Common myeloid progenitor, CD34-positive (primary cell): ENCODE measurements at regions of chr2 and their contacts with region 1.

Region 1: GRCh38 chr2:29796446-29796845 is 124.9 kb downstream of the ALK start:
- DNase-seq: no peak
- H3K4me3 ChIP-seq: no peak overlapping the region
- H3K27ac ChIP-seq: no peak overlapping the region
- H3K4me1 ChIP-seq: no peaks in the 10 kb centered on the region
- H3K27me3 ChIP-seq: peaks cover 0 to 10% (median 0%) of the 10 kb centered on the region in 5 experiments

Region 2: DNA sequence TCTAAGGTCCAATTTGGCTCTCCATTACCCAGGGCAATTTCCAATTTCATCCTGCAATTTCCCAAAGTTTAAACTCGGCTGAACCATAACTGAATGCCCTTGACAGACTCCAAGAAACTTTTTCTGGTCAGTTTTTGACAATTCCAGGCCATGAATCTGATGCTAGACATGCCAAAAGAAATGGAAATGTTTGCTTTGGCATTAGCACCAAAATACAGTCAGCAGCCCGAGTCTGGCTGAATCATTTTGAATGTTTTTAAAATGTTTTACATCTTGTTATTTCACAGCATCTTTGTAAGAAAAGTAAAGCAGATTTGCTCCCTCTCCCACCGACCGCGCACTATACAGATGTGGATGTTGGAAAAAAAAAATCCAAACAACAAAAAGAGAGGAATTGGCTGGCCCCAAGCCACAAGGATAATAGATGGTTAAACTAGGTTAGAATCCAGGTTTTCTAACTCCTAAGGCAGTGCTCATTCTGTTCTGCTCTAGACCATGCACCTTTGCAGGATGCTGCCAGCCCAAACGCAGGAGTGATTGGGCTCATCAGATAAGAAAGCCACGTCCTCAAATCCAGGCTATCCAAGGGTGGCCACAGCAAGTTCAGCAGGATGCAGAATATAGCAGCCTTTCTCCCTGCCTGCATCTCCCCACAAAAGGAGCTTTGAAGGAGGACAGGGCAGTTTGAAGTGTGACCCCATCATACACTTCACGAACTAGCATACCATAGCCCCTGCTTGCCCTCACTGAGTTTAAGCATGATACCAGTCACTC is 42.6 kb before region 1 on chr2:
- CTCF ChIA-PET with region 1: no interaction called
- POLR2A ChIA-PET with region 1: no interaction called
- DNase-seq: no peak
- H3K4me3 ChIP-seq: no peak overlapping the region
- H3K27ac ChIP-seq: no peak overlapping the region
- H3K4me1 ChIP-seq: no peaks in the 10 kb centered on the region
- H3K27me3 ChIP-seq: peaks cover 0 to 4% (median 0%) of the 10 kb centered on the region in 5 experiments

Region 3: DNA sequence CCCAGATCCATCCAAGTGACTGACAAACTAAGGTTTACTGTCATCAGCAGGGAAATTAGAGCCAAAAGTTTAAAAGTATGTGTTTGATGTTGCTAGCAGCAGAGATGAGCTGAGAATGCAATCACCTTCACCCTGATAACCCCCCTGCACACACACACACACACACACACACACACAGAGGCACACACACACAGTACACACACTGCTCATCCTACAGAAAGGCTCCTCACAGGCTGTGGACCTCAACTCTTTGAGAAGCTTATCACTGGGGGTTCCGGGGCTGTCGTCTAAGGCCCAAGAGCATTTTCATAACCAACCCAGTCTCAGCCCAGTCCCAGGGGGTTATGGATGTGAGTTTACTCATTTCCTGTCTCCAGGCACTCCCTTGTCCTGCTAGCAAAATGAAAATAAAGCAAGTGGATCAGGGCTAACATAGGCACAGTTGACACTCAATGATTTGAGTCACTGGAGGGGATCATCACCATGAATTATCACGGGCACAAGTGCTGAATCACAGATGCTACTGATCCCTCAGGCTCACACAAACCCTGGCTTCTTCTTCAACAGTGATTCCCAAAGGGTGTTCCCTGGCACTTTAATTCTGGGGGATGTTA is 48.4 kb after region 1 on chr2:
- CTCF ChIA-PET with region 1: no interaction called
- POLR2A ChIA-PET with region 1: interaction called, 11 read pairs
- DNase-seq: no peak
- H3K4me3 ChIP-seq: no peak overlapping the region
- H3K27ac ChIP-seq: no peak overlapping the region
- H3K4me1 ChIP-seq: peaks cover 2 to 14% (median 11%) of the 10 kb centered on the region in 4 experiments
- H3K27me3 ChIP-seq: peaks cover 0 to 4% (median 0%) of the 10 kb centered on the region in 5 experiments

Region 4: GRCh38 chr2:29865512-29865911 is 69.1 kb after region 1 on chr2:
- CTCF ChIA-PET with region 1: no interaction called
- POLR2A ChIA-PET with region 1: no interaction called
- DNase-seq: no peak
- H3K4me3 ChIP-seq: no peak overlapping the region
- H3K27ac ChIP-seq: no peak overlapping the region
- H3K4me1 ChIP-seq: no peaks in the 10 kb centered on the region
- H3K27me3 ChIP-seq: peaks cover 0 to 4% (median 2%) of the 10 kb centered on the region in 5 experiments

Region 5: DNA sequence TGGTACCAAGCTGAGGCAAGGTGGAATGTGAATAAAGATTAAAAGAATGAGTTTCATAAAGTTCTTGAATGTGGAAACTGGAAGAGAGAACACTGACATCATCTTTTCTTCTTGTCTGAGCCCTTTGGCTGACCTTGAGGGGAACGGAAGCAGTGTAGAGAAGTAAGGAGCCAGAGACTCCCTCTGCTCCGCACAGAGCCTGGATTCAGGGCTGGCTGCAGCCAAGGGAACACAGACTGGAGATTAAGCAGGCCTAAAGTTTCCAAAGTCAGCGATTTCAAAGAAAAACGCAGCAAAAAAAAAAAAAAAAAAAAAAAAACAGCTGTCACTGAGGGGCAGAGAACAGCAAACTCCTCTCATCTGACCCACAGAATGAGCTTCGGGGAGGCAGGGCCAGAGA is 144.3 kb after region 1 on chr2:
- CTCF ChIA-PET with region 1: no interaction called
- POLR2A ChIA-PET with region 1: no interaction called
- DNase-seq: no peak
- H3K4me3 ChIP-seq: no peak overlapping the region
- H3K27ac ChIP-seq: no peak overlapping the region
- H3K4me1 ChIP-seq: no peaks in the 10 kb centered on the region
- H3K27me3 ChIP-seq: peaks cover 0 to 3% (median 0%) of the 10 kb centered on the region in 5 experiments